Dorsolateral prefrontal cortex (tissue), 120 donors: ENCODE measurements at regions of chr3 and their contacts with region 1.

Region 1: DNA sequence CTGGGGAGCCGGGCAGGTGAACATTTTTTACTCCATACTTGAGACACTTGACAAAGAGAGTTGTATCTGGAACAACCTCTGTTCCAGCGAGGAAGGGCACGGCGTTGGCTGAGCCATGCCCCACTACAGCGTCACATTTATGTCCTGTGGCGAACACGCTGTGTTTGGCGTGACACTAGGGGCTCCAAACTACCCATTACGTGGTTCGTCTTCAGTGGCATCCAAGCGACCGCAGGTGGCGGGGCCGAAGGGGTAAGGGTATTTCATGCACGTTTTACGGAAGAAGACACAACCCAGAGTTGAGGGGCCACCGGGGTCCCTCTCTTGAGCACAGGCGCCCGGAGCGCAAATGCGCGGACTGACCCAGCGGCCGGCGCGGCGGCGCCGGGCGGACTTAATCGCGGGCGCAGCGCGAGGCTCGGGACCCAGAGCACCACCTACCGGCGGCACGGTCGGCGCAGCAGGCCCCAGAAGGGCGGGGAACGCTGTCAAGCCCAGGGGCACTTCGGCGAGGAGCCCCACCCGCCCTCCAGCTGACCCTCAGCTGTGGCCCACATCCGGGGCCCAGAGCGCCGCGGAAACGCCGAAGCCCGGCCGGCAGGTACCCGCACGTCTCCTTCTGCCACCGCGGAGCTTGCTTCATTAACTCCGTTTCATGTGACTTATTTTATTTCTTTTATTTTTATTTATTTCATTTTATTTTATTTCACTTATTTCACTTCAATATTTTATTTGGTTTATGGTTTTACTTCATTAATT is 36.4 kb upstream of the TRIM71 start:
- DNase-seq: peak; percentile 44 to 82 (median 58)
- H3K4me3 ChIP-seq: peak overlapping the region; percentile 39 to 83 (median 67)
- H3K27ac ChIP-seq: peak overlapping the region in 2 of 59 donors; percentile 21 to 40
- H3K27me3 ChIP-seq: no peaks in the 10 kb centered on the region
- CTCF ChIP-seq: peak; percentile 33 to 91 (median 76)

Region 2: GRCh38 chr3:32077260-32078084 is 703.9 kb before region 1 on chr3:
- intact Hi-C with region 1: no loop called
- DNase-seq: no peak
- H3K4me3 ChIP-seq: no peak overlapping the region
- H3K27ac ChIP-seq: no peak overlapping the region
- H3K27me3 ChIP-seq: peaks cover 0 to 4% (median 0%) of the 10 kb centered on the region in 45 donors
- CTCF ChIP-seq: no peak

Region 3: GRCh38 chr3:32684800-32685542 is 96.4 kb before region 1 on chr3 and contains the start of gene CNOT10:
- intact Hi-C with region 1: loop called in 1 of 2 experiments (anchors 5 kb)
- DNase-seq: peak; percentile 92 to 99 (median 96)
- H3K4me3 ChIP-seq: peak within 1 kb of the TSS; percentile 62 to 99 (median 87)
- H3K27ac ChIP-seq: peak within 1 kb of the TSS in 58 of 59 donors; percentile 13 to 93 (median 82)
- H3K27me3 ChIP-seq: no peaks in the 10 kb centered on the region
- CTCF ChIP-seq: peak in 42 of 56 donors; percentile 4 to 66 (median 42)
- total RNA-seq, gene CNOT10: 22.8 to 54.2 (median 35.4) TPM

Region 4: GRCh38 chr3:32733631-32734229 is 47.7 kb before region 1 on chr3:
- intact Hi-C with region 1: loop called in 1 of 2 experiments (anchors 5 kb)
- DNase-seq: no peak
- H3K4me3 ChIP-seq: no peak overlapping the region
- H3K27ac ChIP-seq: no peak overlapping the region
- H3K27me3 ChIP-seq: no peaks in the 10 kb centered on the region
- CTCF ChIP-seq: peak; percentile 37 to 80 (median 63)

Region 5: GRCh38 chr3:33030802-33031201 is 249.4 kb after region 1 on chr3:
- intact Hi-C with region 1: no loop called
- DNase-seq: no peak
- H3K4me3 ChIP-seq: no peak overlapping the region
- H3K27ac ChIP-seq: no peak overlapping the region
- H3K27me3 ChIP-seq: no peaks in the 10 kb centered on the region
- CTCF ChIP-seq: no peak